Activated T-helper 1 cell treated with anti-CD3 and anti-CD28 coated beads, Interleukin-12 subunit alpha, Interleukin-12 subunit beta, Interleukin-2, Interleukin-4 antibody, amounts not matched to agents 30 ng/mL and 10 ng/mL and 1 ng/mL, durations not matched to agents 14 hours and 24 hours and 36 hours (primary cell): ENCODE measurements at regions of chr2 and their contacts with region 1.

Region 1: GRCh38 chr2:142165790-142166189 is 35.0 kb upstream of the LRP1B start:
- DNase-seq: no peak
- H3K4me3 Mint-ChIP-seq: no peak overlapping the region
- H3K27ac Mint-ChIP-seq: no peak overlapping the region
- H3K4me1 Mint-ChIP-seq: no peaks in the 10 kb centered on the region
- H3K27me3 Mint-ChIP-seq: no peaks in the 10 kb centered on the region

Region 2: GRCh38 chr2:142989273-142990204 is 823.7 kb after region 1 on chr2:
- intact Hi-C with region 1: loop called (anchors 10 kb)
- DNase-seq: no peak
- H3K4me3 Mint-ChIP-seq: no peak overlapping the region
- H3K27ac Mint-ChIP-seq: no peak overlapping the region
- H3K4me1 Mint-ChIP-seq: no peaks in the 10 kb centered on the region
- H3K27me3 Mint-ChIP-seq: peaks cover 19% of the 10 kb centered on the region